Mammary epithelial cell (primary cell): ENCODE measurements at regions of chr17 and their contacts with region 1.

Region 1: DNA sequence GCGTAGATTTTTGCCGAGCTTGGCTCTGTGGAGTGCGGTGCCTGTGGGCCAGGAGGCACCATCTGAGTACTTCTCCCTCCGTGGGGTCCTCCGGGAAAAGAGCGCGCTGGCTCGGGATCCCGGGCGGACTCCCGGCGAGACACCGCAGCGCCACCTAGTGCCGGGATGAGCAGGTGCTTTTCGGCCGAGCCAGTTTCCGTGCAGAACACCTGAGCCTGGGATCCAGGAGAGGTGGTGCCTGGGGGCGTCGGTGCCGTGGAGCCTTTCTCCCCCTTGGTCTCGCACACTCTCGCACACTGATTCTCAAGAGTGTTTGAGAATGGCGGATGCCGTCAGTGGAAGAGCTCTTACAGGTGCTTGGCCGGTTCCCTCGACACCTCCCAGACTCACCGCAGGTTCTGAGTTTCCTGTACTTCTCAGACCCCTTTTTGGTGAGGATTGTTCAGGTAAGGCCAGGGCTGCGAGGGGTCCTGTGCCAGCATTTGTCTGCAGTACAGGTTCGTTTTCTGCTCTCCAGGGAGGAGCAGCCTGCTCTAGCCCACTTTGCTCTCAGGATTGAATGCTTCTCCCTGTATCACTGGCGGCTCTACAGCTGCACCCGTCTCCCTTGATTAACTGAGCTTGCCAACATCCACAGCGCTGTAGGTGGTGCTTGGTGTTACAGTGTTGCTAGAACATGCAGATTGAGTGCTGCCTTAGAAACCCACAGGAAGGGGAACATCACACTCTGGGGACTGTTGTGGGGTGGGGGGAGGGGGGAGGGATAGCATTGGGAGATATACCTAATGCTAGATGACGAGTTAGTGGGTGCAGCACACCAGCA is 23.3 kb downstream of the TBCD start:
- DNase-seq: no peak
- H3K4me3 ChIP-seq: peak overlapping the region in 1 of 3 experiments; percentile 29
- H3K27ac ChIP-seq: no peak overlapping the region
- H3K4me1 ChIP-seq: no peaks in the 10 kb centered on the region
- H3K27me3 ChIP-seq: no peaks in the 10 kb centered on the region
- CTCF ChIP-seq: peak; percentile 68 to 92

Region 2: GRCh38 chr17:82351716-82352488 is 423.3 kb before region 1 on chr17:
- CTCF ChIA-PET with region 1: no interaction called
- dilution Hi-C with region 1: no loop called
- in situ Hi-C with region 1: loop called in 1 of 2 experiments (anchors 10 kb)
- intact Hi-C with region 1: no loop called
- DNase-seq: peak; percentile 64
- H3K4me3 ChIP-seq: no peak overlapping the region
- H3K27ac ChIP-seq: no peak overlapping the region
- H3K4me1 ChIP-seq: peaks cover 20% of the 10 kb centered on the region
- H3K27me3 ChIP-seq: no peaks in the 10 kb centered on the region
- CTCF ChIP-seq: peak; percentile 86 to 94

Region 3: GRCh38 chr17:82655038-82655479 is 120.2 kb before region 1 on chr17:
- CTCF ChIA-PET with region 1: no interaction called
- dilution Hi-C with region 1: no loop called
- in situ Hi-C with region 1: loop called in 1 of 2 experiments (anchors 5 kb)
- intact Hi-C with region 1: no loop called
- DNase-seq: no peak
- H3K4me3 ChIP-seq: no peak overlapping the region
- H3K27ac ChIP-seq: no peak overlapping the region
- H3K4me1 ChIP-seq: no peaks in the 10 kb centered on the region
- H3K27me3 ChIP-seq: no peaks in the 10 kb centered on the region
- CTCF ChIP-seq: no peak

Region 4: DNA sequence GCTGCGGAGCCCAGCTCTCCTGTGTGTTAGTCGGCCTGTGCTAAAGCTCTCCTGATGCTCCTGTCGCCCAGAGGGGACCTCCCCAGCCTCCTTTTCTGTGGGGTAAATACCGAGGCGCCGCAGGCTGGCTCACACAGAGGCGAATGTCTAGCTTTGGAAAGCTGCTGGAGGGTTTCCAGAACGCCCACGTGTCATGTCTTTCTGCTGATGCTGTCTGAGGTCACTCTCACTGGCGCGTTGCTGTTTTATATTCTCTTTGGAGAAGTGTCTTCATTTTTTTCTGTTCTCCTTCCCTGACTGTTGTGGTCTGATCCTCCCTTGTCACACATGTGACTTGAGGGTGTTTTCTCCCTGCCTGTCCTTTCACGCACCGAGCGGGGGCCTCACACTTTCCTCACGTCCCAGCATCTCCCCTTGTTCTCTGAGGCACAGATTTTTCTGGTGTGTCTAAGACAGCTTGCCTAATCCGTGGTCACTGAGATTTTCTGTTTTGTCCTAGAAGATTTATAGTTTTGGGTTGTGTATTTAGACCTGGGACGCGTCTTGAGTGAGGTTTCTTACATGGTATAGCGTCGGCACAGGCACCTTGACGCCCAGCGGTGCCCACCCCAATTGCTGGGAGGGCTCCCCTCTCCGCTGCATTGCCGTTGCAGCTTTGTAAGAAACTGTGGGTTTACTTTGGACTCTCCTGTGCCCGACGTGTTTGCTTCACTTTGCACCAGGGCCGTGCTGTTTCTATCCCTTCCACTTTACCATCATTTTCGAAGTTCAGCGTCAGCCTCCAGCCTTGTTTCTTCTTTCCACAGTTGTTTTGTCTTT is 156.7 kb after region 1 on chr17:
- CTCF ChIA-PET with region 1: no interaction called
- dilution Hi-C with region 1: no loop called
- in situ Hi-C with region 1: no loop called
- intact Hi-C with region 1: no loop called
- DNase-seq: peak; percentile 81
- H3K4me3 ChIP-seq: no peak overlapping the region
- H3K27ac ChIP-seq: no peak overlapping the region
- H3K4me1 ChIP-seq: peaks cover 12% of the 10 kb centered on the region
- H3K27me3 ChIP-seq: no peaks in the 10 kb centered on the region
- CTCF ChIP-seq: no peak